B cell (primary cell): ENCODE measurements at regions of chr13 and their contacts with region 1.

Region 1: GRCh38 chr13:74026753-74027152 is 107.5 kb downstream of the KLF12 start:
- DNase-seq: peak; percentile 75
- ATAC-seq: peak; percentile 93
- H3K4me3 ChIP-seq: peak overlapping the region; percentile 7 to 52 (median 18)
- H3K4me3 Mint-ChIP-seq: peak overlapping the region; percentile 79
- H3K27ac ChIP-seq: peak overlapping the region; percentile 71 to 85
- H3K27ac Mint-ChIP-seq: peak overlapping the region; percentile 89
- H3K4me1 ChIP-seq: peaks cover 20 to 43% of the 10 kb centered on the region in 2 donors
- H3K4me1 Mint-ChIP-seq: peaks cover 72% of the 10 kb centered on the region
- H3K27me3 ChIP-seq: no peaks in the 10 kb centered on the region
- H3K27me3 Mint-ChIP-seq: no peaks in the 10 kb centered on the region
- CTCF ChIP-seq: no peak

Region 2: DNA sequence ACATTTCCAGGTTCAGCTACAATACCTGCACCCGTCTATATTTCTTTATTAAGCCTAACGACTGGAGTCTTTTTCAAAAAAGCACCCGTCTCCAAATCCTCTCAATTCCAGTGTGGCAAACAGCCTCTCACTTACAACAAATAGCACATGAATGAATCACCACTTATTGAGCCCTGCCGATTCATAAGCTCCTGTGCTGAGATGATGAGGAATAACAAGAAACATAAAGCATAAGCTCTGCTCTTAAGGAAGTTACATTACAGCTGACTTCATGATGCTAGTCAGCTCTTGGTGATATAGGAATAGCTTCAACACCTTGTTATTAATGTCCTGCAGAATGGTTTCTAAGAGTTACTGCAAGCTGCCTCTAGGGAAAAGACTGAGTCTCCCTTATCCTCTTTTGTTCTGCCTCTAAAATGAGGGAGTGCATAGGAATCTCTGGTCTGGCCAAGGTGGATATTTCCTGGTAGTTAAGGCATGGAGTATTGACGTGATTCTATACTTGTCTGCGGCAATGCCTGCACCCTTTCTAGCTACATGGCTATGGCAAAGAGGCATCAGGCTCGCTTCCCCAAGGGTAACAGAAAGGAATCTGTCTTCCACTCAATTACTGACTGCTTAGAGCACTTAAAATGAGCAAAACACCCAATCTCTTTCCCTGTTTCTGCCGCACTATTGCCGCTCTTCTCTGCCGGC is 88.2 kb before region 1 on chr13:
- CTCF ChIA-PET with region 1: no interaction called
- POLR2A ChIA-PET with region 1: no interaction called
- intact Hi-C with region 1: no loop called
- DNase-seq: no peak
- ATAC-seq: no peak
- H3K4me3 ChIP-seq: no peak overlapping the region
- H3K4me3 Mint-ChIP-seq: no peak overlapping the region
- H3K27ac ChIP-seq: no peak overlapping the region
- H3K27ac Mint-ChIP-seq: no peak overlapping the region
- H3K4me1 ChIP-seq: no peaks in the 10 kb centered on the region
- H3K4me1 Mint-ChIP-seq: peaks cover 41% of the 10 kb centered on the region
- H3K27me3 ChIP-seq: no peaks in the 10 kb centered on the region
- H3K27me3 Mint-ChIP-seq: no peaks in the 10 kb centered on the region
- CTCF ChIP-seq: no peak

Region 3: GRCh38 chr13:73967397-73968165 is 59.2 kb before region 1 on chr13:
- CTCF ChIA-PET with region 1: no interaction called
- POLR2A ChIA-PET with region 1: no interaction called
- intact Hi-C with region 1: loop called (anchors 5 kb)
- DNase-seq: peak; percentile 80
- ATAC-seq: peak; percentile 91
- H3K4me3 ChIP-seq: no peak overlapping the region
- H3K4me3 Mint-ChIP-seq: peak overlapping the region; percentile 44
- H3K27ac ChIP-seq: peak overlapping the region; percentile 47 to 48
- H3K27ac Mint-ChIP-seq: peak overlapping the region; percentile 76
- H3K4me1 ChIP-seq: peaks cover 23 to 28% of the 10 kb centered on the region in 2 donors
- H3K4me1 Mint-ChIP-seq: peaks cover 55% of the 10 kb centered on the region
- H3K27me3 ChIP-seq: no peaks in the 10 kb centered on the region
- H3K27me3 Mint-ChIP-seq: no peaks in the 10 kb centered on the region
- CTCF ChIP-seq: no peak

Region 4: GRCh38 chr13:73991884-73992283 is 34.9 kb before region 1 on chr13:
- CTCF ChIA-PET with region 1: no interaction called
- POLR2A ChIA-PET with region 1: no interaction called
- intact Hi-C with region 1: loop called (anchors 5 kb)
- DNase-seq: no peak
- ATAC-seq: no peak
- H3K4me3 ChIP-seq: no peak overlapping the region
- H3K4me3 Mint-ChIP-seq: no peak overlapping the region
- H3K27ac ChIP-seq: no peak overlapping the region
- H3K27ac Mint-ChIP-seq: peak overlapping the region; percentile 77
- H3K4me1 ChIP-seq: peaks cover 25 to 31% of the 10 kb centered on the region in 2 donors
- H3K4me1 Mint-ChIP-seq: peaks cover 63% of the 10 kb centered on the region
- H3K27me3 ChIP-seq: no peaks in the 10 kb centered on the region
- H3K27me3 Mint-ChIP-seq: no peaks in the 10 kb centered on the region
- CTCF ChIP-seq: no peak

Region 5: DNA sequence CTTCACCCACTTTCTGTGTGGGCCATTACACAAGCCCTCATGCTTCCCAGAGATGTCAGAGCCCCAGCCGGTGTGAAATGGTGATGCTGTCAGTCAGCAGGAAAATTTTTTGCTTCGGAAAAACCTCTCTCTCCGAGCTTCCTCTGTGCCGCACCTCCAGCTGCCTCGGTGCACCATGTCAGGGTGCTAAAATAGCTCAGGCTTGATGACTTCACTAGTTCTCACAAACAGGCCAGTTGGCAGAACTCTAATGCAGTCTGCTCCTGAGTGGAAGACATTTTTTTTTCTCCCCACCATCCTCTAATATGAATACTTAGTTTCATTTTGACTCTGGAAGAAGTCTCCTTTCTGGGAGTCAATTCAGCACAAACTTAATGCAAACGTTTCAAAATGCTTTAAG is 36.2 kb after region 1 on chr13:
- CTCF ChIA-PET with region 1: no interaction called
- POLR2A ChIA-PET with region 1: no interaction called
- intact Hi-C with region 1: loop called (anchors 5 kb)
- DNase-seq: peak; percentile 34
- ATAC-seq: peak; percentile 50
- H3K4me3 ChIP-seq: peak overlapping the region in 3 of 5 experiments; percentile 21 to 49 (median 22)
- H3K4me3 Mint-ChIP-seq: peak overlapping the region; percentile 83
- H3K27ac ChIP-seq: peak overlapping the region; percentile 63 to 81
- H3K27ac Mint-ChIP-seq: peak overlapping the region; percentile 88
- H3K4me1 ChIP-seq: peaks cover 49 to 59% of the 10 kb centered on the region in 2 donors
- H3K4me1 Mint-ChIP-seq: peaks cover 81% of the 10 kb centered on the region
- H3K27me3 ChIP-seq: no peaks in the 10 kb centered on the region
- H3K27me3 Mint-ChIP-seq: no peaks in the 10 kb centered on the region
- CTCF ChIP-seq: no peak